Cardiac septum (tissue), 1 donor: ENCODE measurements at regions of chr20 and their contacts with region 1.

Region 1: GRCh38 chr20:32484958-32485769 is 100.0 kb downstream of the NOL4L start:
- DNase-seq: no peak

Region 2: DNA sequence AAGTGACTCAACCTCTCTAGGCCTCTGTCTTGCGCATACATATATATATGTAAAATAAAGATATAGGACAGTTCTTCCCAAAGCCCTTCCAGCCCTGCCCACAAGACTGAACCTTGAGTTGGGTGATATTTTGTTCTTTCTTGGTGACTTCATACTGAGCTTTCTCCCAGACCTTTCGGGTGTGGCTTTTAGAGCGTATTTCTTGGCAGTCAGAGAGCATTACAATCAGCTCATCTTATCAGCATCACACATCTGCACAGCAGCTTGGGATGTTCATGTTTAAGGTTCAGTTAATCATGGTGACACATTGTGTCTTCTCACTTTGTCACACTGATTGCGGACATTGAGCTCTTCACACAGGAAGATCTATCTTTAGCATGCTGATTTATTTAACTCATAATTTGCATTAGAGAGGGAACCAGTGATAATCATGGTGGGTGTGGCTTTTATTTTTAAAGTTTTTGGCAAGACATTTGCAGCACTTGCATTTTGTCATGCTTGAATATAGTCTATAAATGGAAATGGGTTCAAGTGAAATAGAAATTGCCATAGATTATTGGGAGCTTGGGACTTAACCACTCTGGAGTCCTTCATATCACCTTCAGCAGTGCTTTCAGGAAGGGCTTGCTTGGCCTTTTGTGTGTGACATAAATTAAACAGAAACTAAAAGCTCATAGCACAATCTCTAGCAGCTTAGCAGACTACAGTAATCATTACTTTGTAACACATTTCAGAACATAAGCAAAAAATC is 199.4 kb before region 1 on chr20:
- intact Hi-C with region 1: loop called (anchors 5 kb)
- DNase-seq: no peak